IMR-90 (cell line): ENCODE measurements at regions of chr12 and their contacts with region 1.

Region 1: GRCh38 chr12:89529738-89530137 is 3.9 kb upstream of the POC1B start:
- DNase-seq: peak; percentile 67
- ATAC-seq: peak; percentile 44
- H3K4me3 ChIP-seq: no peak overlapping the region
- H3K27ac ChIP-seq: no peak overlapping the region
- H3K4me1 ChIP-seq: no peaks in the 10 kb centered on the region
- H3K27me3 ChIP-seq: no peaks in the 10 kb centered on the region
- CTCF ChIP-seq: peak; percentile 87
- POLR2A ChIP-seq: no peak
- RAD21 ChIP-seq: peak; percentile 91

Region 2: DNA sequence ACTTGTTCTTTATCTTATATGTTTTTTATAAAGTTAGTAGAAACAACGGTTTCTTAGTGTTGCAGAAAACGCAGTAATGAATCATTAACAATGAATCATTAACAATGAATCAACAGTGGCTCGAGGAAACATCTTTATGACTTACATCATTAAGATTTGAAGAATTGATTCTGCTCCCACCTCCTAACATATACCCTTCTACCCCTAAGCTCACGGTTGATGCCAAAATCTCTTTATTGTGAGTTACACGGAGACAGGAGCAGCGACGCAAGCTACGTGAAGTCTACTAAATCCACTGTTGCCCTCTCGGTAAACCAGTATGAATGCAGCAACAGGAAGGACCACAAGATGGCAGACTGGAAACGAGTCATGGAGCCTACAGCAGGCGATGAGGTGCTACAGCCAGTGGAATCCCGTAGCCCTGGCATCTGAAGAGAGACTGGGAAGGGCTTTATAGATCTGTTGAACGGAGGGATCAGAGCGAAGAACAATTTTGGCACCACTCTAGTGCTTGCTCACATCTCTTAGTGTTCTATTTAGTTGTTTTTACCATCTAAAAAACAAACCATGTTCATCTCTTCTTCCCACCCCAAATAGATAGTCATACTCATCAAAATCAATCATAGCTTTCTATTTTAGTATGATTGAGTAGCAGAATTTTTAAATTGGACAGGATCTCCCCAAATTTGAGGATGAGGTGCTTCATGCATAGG is 510.2 kb before region 1 on chr12:
- CTCF ChIA-PET with region 1: interaction called, 10 read pairs
- POLR2A ChIA-PET with region 1: no interaction called
- dilution Hi-C with region 1: no loop called
- in situ Hi-C with region 1: loop called (anchors 5 kb)
- intact Hi-C with region 1: loop called (anchors 1 kb)
- DNase-seq: peak; percentile 88
- ATAC-seq: peak; percentile 97
- H3K4me3 ChIP-seq: peak overlapping the region; percentile 28
- H3K27ac ChIP-seq: no peak overlapping the region; the same call in 1 of the 2 replicates
- H3K4me1 ChIP-seq: no peaks in the 10 kb centered on the region
- H3K27me3 ChIP-seq: no peaks in the 10 kb centered on the region
- CTCF ChIP-seq: peak; percentile 96
- POLR2A ChIP-seq: no peak; the same call in 1 of the 2 replicates
- RAD21 ChIP-seq: peak; percentile 95

Region 3: GRCh38 chr12:89041078-89041477 is 488.7 kb before region 1 on chr12:
- CTCF ChIA-PET with region 1: no interaction called
- POLR2A ChIA-PET with region 1: no interaction called
- dilution Hi-C with region 1: no loop called
- in situ Hi-C with region 1: no loop called
- intact Hi-C with region 1: no loop called
- DNase-seq: no peak
- ATAC-seq: no peak
- H3K4me3 ChIP-seq: no peak overlapping the region
- H3K27ac ChIP-seq: no peak overlapping the region
- H3K4me1 ChIP-seq: no peaks in the 10 kb centered on the region
- H3K27me3 ChIP-seq: no peaks in the 10 kb centered on the region
- CTCF ChIP-seq: no peak
- POLR2A ChIP-seq: no peak
- RAD21 ChIP-seq: no peak

Region 4: DNA sequence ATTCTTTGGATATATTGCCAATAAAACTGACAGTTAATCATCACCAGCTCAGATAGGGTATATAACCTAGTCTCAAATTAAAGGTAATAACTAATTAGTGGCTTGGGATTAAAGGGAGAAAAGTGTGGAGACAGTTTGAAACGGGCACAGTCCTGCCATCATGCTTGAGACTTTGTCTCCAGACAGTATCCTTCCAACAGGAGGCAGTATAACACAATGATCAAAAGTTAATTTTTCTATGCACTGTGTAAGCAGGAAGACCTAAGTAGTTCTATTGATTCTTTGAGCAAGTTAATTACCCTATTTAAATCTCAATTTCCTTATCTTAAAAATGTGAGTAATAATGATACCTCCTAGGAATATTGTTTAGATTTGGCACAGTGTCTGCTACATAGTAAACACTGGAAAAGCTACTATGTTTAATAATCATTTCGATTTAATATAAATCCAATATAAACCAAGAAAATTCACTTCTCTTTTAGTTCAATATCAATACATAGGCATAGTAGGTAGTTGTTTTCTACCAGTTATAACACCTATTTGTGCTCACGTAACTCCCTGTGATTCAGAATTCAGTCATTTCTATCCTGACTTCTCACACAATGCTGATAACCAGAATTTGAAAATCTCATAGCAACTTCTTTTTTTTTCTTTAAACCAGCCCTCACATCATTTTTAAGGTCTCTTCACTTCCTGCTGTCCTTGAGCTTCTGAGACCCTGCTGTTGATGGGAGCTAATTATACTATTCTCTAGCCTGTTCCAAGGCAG is 58.8 kb before region 1 on chr12:
- CTCF ChIA-PET with region 1: interaction called, 5 read pairs
- POLR2A ChIA-PET with region 1: interaction called, 3 read pairs
- dilution Hi-C with region 1: no loop called
- in situ Hi-C with region 1: loop called (anchors 5 kb)
- intact Hi-C with region 1: loop called (anchors 1 kb)
- DNase-seq: peak; percentile 68
- ATAC-seq: peak; percentile 85
- H3K4me3 ChIP-seq: no peak overlapping the region
- H3K27ac ChIP-seq: no peak overlapping the region
- H3K4me1 ChIP-seq: peaks cover 5% of the 10 kb centered on the region; the same call in 1 of the 2 replicates
- H3K27me3 ChIP-seq: no peaks in the 10 kb centered on the region
- CTCF ChIP-seq: peak; percentile 73
- POLR2A ChIP-seq: no peak
- RAD21 ChIP-seq: peak; percentile 80

Region 5: DNA sequence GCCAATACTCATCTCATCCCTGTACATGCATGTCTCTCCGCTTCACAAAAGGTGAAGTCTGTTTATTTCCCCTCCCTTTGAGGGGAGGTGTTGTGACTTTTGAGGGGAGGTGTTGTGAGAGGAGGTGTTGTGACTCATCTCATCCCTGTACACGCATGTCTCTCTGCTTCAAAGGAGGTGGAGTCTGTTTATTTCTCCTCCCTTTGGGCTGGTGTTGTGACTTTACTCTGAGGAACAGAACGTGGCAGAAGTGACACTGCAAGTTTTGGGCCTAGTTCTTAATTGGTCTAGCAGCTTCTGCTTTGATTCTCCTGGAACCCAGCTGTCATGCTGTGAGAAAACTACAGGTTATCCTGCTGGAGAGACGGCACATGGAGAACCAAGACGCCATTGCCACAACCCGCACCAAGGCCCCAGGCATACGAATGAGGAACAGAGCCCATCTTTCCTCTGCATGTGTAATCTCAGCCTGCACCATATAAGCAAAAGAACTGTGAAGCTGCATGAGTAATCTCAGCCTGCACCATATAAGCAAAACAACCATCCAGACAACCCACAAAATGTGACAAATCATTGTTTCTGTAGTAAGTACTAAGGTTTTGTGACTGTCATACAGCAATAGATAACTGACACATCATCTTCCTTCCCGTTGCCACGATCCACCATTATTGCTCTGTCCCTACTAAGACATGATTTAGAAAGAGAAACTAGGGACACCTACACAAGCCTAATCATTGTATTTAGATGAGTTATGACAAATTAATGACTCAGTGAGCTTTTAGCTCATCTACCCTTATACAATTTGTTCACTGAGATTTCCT is 35.1 kb before region 1 on chr12:
- CTCF ChIA-PET with region 1: no interaction called
- POLR2A ChIA-PET with region 1: no interaction called
- dilution Hi-C with region 1: no loop called
- in situ Hi-C with region 1: no loop called
- intact Hi-C with region 1: no loop called
- DNase-seq: peak; percentile 81
- ATAC-seq: peak; percentile 91
- H3K4me3 ChIP-seq: peak overlapping the region; percentile 2; the same call in 1 of the 2 replicates
- H3K27ac ChIP-seq: no peak overlapping the region
- H3K4me1 ChIP-seq: peaks cover 6% of the 10 kb centered on the region
- H3K27me3 ChIP-seq: no peaks in the 10 kb centered on the region
- CTCF ChIP-seq: no peak
- POLR2A ChIP-seq: no peak
- RAD21 ChIP-seq: no peak

Region 6: DNA sequence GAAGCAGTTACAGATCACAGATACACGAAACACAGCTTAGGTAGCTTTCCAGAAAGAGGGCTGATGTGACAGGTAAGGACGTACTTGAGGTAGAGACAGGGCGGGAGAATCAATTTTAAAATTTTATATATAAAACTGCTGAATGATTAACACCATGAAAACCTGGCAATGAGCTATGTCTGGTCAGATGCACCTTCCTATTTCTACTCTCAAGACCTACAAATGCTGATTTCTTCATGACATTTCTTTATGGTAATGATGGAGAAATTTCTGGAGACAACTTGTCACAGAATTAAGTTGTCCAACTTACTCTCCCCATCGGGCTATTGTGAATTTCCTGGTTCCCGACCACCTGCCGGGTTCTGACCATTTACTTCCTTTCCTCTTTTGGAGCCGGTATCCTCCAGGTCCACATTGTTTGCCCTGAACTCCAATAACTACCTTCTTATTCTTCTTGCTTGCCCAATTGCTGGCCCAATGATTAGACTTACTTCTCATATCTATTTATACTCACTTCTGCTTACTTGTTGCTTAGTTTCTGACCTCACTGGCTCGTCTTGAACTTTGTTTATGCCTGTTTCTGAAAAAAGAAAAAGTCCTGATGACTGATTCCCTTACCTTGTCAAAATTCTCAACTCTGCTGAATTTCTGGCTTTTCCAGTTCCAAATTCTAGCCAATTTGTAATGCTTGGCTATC is 191.7 kb after region 1 on chr12:
- CTCF ChIA-PET with region 1: no interaction called
- POLR2A ChIA-PET with region 1: no interaction called
- dilution Hi-C with region 1: no loop called
- in situ Hi-C with region 1: no loop called
- intact Hi-C with region 1: no loop called
- DNase-seq: no peak
- ATAC-seq: no peak
- H3K4me3 ChIP-seq: no peak overlapping the region
- H3K27ac ChIP-seq: no peak overlapping the region
- H3K4me1 ChIP-seq: no peaks in the 10 kb centered on the region
- H3K27me3 ChIP-seq: no peaks in the 10 kb centered on the region
- CTCF ChIP-seq: no peak
- POLR2A ChIP-seq: no peak
- RAD21 ChIP-seq: no peak